ENCODE measurements at regions of chr10 and their contacts with region 1.

Region 1: GRCh38 chr10:21732067-21732772 is 198.2 kb downstream of the MLLT10 start:
- DNase-seq: peak; percentile 57 to 85 (median 83)
- ATAC-seq: peak; percentile 91 to 93
- H3K4me3 ChIP-seq: no peak overlapping the region
- H3K27ac ChIP-seq: no peak overlapping the region
- H3K4me1 ChIP-seq: no peaks in the 10 kb centered on the region
- H3K27me3 ChIP-seq: no peaks in the 10 kb centered on the region

Region 2: GRCh38 chr10:21278491-21279239 is 453.6 kb before region 1 on chr10:
- intact Hi-C with region 1: loop called in 3 of 4 experiments (anchors 10 kb)
- DNase-seq: peak; percentile 96 to 99 (median 96)
- ATAC-seq: peak; percentile 97 to 98
- H3K4me3 ChIP-seq: no peak overlapping the region
- H3K27ac ChIP-seq: no peak overlapping the region
- H3K4me1 ChIP-seq: no peaks in the 10 kb centered on the region
- H3K27me3 ChIP-seq: no peaks in the 10 kb centered on the region

Region 3: GRCh38 chr10:21547246-21547645 is 185.0 kb before region 1 on chr10:
- intact Hi-C with region 1: loop called in 1 of 4 experiments (anchors 10 kb)
- DNase-seq: no peak
- ATAC-seq: no peak
- H3K4me3 ChIP-seq: no peak overlapping the region
- H3K27ac ChIP-seq: no peak overlapping the region
- H3K4me1 ChIP-seq: peaks cover 3% of the 10 kb centered on the region
- H3K27me3 ChIP-seq: no peaks in the 10 kb centered on the region

Region 4: GRCh38 chr10:21843645-21844044 is 111.4 kb after region 1 on chr10:
- intact Hi-C with region 1: no loop called
- DNase-seq: no peak
- ATAC-seq: no peak
- H3K4me3 ChIP-seq: no peak overlapping the region
- H3K27ac ChIP-seq: no peak overlapping the region
- H3K4me1 ChIP-seq: no peaks in the 10 kb centered on the region
- H3K27me3 ChIP-seq: no peaks in the 10 kb centered on the region

Measured in right cardiac atrium (tissue), 5 donors.